ENCODE measurements at regions of chr16 and their contacts with region 1.

Region 1: DNA sequence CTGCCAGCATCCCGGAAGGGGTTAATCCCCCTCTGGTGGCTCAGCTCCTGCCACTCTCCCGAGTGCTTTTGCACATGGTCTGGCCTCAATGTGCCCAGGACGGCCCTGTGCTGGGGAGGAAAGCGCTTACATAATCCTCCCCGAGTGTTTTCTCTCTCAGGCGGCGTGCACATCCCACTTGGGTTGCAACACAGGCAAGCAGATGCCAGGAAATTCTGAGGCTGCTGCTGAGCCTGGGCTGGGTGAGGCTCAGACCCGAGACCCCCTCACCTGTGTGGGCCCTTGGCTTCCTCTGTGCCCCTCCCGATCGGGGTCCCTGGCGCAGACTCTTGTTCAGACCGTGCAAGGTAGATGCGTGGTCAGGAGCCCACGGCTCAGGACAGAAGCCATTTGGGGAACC is 144.7 kb downstream of the LAT start:
- DNase-seq: peak; percentile 87

Region 2: GRCh38 chr16:29154676-29155121 is 25.2 kb after region 1 on chr16:
- intact Hi-C with region 1: no loop called
- DNase-seq: no peak

Region 3: DNA sequence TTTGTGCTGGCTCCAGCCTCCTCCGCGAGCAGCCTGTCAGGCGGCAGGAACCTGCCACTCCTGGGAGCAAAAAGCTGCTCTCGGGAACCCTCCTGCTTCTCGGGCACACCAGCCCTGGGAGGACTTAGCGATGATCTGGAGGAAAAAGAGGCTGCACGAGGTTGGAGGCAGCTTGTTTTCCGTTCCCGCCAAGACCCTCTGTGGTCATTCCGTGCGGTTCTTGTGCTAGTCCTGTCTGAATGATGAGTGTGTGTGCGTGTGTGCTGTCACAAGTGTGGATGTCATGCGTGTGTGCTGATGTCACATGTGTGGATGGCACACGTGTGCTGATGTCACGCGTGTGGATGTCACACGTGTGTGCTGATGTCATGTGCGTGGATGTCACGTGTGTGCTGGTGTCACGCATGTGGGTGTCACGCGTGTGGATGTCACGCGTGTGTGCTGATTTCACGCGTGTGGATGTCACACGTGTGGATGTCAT is 127.0 kb after region 1 on chr16:
- intact Hi-C with region 1: loop called in 1 of 2 experiments (anchors 10 kb)
- DNase-seq: no peak

Measured in posterior vena cava (tissue), 2 donors.